Endothelial cell of umbilical vein (primary cell): ENCODE measurements at regions of chr4 and their contacts with region 1.

Region 1: DNA sequence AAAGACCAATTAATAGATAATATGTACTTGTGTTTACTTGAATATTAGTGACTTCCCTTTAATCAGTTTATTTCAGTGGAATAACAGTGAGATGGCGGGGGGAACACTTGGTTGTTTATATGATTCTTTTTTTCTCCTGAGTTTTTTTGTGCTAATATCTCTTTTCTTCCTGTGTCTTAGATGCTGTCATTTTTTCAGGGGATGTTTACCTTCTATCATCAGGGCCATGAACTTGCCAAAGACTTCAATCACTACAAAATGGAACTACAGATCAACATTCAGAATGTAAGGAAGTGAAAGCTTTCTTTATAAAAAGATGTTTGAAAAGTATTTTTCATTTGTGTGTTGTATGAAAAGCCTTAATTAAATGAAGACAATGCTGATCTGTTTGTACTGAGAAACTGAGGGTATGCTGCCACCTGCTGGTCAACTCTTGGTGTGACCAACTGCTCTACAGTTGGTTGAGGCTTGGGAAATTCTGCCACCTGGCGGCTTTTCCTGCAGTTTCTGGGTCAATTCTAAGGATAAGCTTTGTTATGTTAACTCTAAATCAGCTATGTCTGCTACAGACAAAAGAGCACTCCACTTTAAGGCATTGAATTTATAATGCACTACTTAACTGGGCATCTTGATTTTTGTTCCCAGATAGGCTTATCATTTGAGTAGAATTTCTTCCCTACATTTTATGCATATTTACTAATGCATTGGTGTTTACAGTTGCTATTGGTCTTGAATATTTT is 134.8 kb downstream of the ARHGAP10 start:
- DNase-seq: peak; percentile 92
- H3K4me3 ChIP-seq: no peak overlapping the region
- H3K27ac ChIP-seq: no peak overlapping the region
- H3K4me1 ChIP-seq: peaks cover 9% of the 10 kb centered on the region
- H3K27me3 ChIP-seq: no peaks in the 10 kb centered on the region
- CTCF ChIP-seq: peak; percentile 92 to 99
- POLR2A ChIP-seq: no peak

Region 2: GRCh38 chr4:147160908-147161513 is 705.7 kb before region 1 on chr4:
- CTCF ChIA-PET with region 1: interaction called, 14 read pairs
- POLR2A ChIA-PET with region 1: no interaction called
- dilution Hi-C with region 1: no loop called
- intact Hi-C with region 1: no loop called
- DNase-seq: peak; percentile 53
- H3K4me3 ChIP-seq: no peak overlapping the region
- H3K27ac ChIP-seq: no peak overlapping the region
- H3K4me1 ChIP-seq: peaks cover 4% of the 10 kb centered on the region
- H3K27me3 ChIP-seq: peaks cover 0 to 14% of the 10 kb centered on the region in 2 experiments
- CTCF ChIP-seq: peak; percentile 65 to 71
- POLR2A ChIP-seq: no peak

Region 3: GRCh38 chr4:147617173-147617840 is 249.4 kb before region 1 on chr4 and contains the start of gene TMEM184C:
- CTCF ChIA-PET with region 1: interaction called, 73 read pairs
- POLR2A ChIA-PET with region 1: no interaction called
- dilution Hi-C with region 1: no loop called
- intact Hi-C with region 1: loop called (anchors 1 kb)
- DNase-seq: peak; percentile 96
- H3K4me3 ChIP-seq: peak within 1 kb of the TSS; percentile 30 to 93 (median 90)
- H3K27ac ChIP-seq: peak within 1 kb of the TSS; percentile 48
- H3K4me1 ChIP-seq: peaks cover 9% of the 10 kb centered on the region
- H3K27me3 ChIP-seq: peaks cover 8 to 12% of the 10 kb centered on the region in 2 experiments
- CTCF ChIP-seq: peak in 1 of 2 donors; percentile 16
- POLR2A ChIP-seq: peak; percentile 84
- total RNA-seq, gene TMEM184C: 27.1 and 29.2 TPM in 2 replicates

Region 4: GRCh38 chr4:147658501-147658900 is 208.2 kb before region 1 on chr4:
- CTCF ChIA-PET with region 1: interaction called, 16 read pairs
- POLR2A ChIA-PET with region 1: no interaction called
- dilution Hi-C with region 1: no loop called
- intact Hi-C with region 1: no loop called
- DNase-seq: no peak
- H3K4me3 ChIP-seq: no peak overlapping the region
- H3K27ac ChIP-seq: no peak overlapping the region
- H3K4me1 ChIP-seq: no peaks in the 10 kb centered on the region
- H3K27me3 ChIP-seq: no peaks in the 10 kb centered on the region
- CTCF ChIP-seq: no peak
- POLR2A ChIP-seq: no peak

Region 5: DNA sequence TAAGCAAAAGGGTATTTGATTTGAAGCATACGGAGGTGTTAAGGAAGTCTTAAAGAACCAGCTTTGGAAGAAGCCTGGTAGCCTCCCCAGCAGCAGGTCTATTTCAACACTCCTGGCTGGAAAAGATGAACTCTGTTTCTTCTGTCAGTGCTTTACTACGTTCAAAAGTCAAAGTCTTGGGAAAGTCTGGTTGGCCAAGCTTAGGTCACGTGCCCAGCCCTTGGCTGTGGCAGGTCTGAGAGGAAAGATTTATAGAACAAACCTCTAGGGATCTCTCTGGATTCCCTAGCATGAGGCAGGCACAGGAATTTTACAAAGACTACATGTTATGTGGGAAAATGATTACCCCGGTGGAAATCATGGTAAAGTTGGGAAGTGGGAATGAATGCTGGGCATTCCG is 143.4 kb before region 1 on chr4:
- CTCF ChIA-PET with region 1: interaction called, 170 read pairs
- POLR2A ChIA-PET with region 1: interaction called, 3 read pairs
- dilution Hi-C with region 1: no loop called
- intact Hi-C with region 1: no loop called
- DNase-seq: no peak
- H3K4me3 ChIP-seq: no peak overlapping the region
- H3K27ac ChIP-seq: no peak overlapping the region
- H3K4me1 ChIP-seq: no peaks in the 10 kb centered on the region
- H3K27me3 ChIP-seq: no peaks in the 10 kb centered on the region
- CTCF ChIP-seq: no peak
- POLR2A ChIP-seq: no peak

Region 6: GRCh38 chr4:147831551-147832177 is 35.0 kb before region 1 on chr4:
- CTCF ChIA-PET with region 1: interaction called, 37 read pairs
- POLR2A ChIA-PET with region 1: no interaction called
- dilution Hi-C with region 1: no loop called
- intact Hi-C with region 1: no loop called
- DNase-seq: peak; percentile 88
- H3K4me3 ChIP-seq: peak overlapping the region in 1 of 3 experiments; percentile 37
- H3K27ac ChIP-seq: peak overlapping the region; percentile 99
- H3K4me1 ChIP-seq: peaks cover 30% of the 10 kb centered on the region
- H3K27me3 ChIP-seq: no peaks in the 10 kb centered on the region
- CTCF ChIP-seq: no peak
- POLR2A ChIP-seq: no peak

Region 7: GRCh38 chr4:148454835-148455234 is 588.1 kb after region 1 on chr4:
- CTCF ChIA-PET with region 1: no interaction called
- POLR2A ChIA-PET with region 1: no interaction called
- dilution Hi-C with region 1: no loop called
- intact Hi-C with region 1: no loop called
- DNase-seq: no peak
- H3K4me3 ChIP-seq: no peak overlapping the region
- H3K27ac ChIP-seq: no peak overlapping the region
- H3K4me1 ChIP-seq: no peaks in the 10 kb centered on the region
- H3K27me3 ChIP-seq: no peaks in the 10 kb centered on the region
- CTCF ChIP-seq: no peak
- POLR2A ChIP-seq: no peak

Region 8: DNA sequence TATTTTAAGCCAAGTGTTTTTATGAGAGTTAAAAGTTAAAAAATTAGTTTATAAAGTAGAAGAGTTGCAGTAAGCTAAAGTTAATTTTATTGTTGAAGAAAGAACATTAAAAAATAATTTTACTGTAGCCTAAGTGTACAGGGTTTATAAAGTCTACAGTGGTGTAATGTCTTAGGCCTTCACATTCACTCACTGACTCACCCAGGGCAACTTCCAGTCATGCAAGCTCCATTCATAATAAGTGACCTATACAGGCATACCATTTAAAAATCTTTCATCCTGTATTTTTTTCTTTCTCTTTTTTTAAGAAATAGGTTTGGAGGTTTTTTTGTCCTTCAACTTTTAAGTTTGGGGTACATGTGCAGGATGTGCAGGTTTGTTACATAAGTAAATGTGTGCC is 663.4 kb after region 1 on chr4:
- CTCF ChIA-PET with region 1: no interaction called
- POLR2A ChIA-PET with region 1: no interaction called
- dilution Hi-C with region 1: no loop called
- intact Hi-C with region 1: no loop called
- DNase-seq: no peak
- H3K4me3 ChIP-seq: no peak overlapping the region
- H3K27ac ChIP-seq: no peak overlapping the region
- H3K4me1 ChIP-seq: no peaks in the 10 kb centered on the region
- H3K27me3 ChIP-seq: no peaks in the 10 kb centered on the region
- CTCF ChIP-seq: no peak
- POLR2A ChIP-seq: no peak